Heart left ventricle (tissue), 16 donors: ENCODE measurements at regions of chr10 and their contacts with region 1.

Region 1: GRCh38 chr10:119041326-119041725 is 11.8 kb downstream of the NANOS1 start:
- DNase-seq: no peak
- ATAC-seq: no peak
- H3K4me3 ChIP-seq: no peak overlapping the region
- H3K27ac ChIP-seq: no peak overlapping the region
- H3K4me1 ChIP-seq: no peaks in the 10 kb centered on the region
- H3K27me3 ChIP-seq: no peaks in the 10 kb centered on the region
- CTCF ChIP-seq: no peak
- POLR2A ChIP-seq: no peak

Region 2: GRCh38 chr10:119070395-119071165 is 29.3 kb after region 1 on chr10:
- intact Hi-C with region 1: loop called in 2 of 10 experiments (anchors 5 kb)
- DNase-seq: no peak
- ATAC-seq: no peak
- H3K4me3 ChIP-seq: no peak overlapping the region
- H3K27ac ChIP-seq: no peak overlapping the region
- H3K4me1 ChIP-seq: peaks cover 0 to 19% (median 4%) of the 10 kb centered on the region in 12 donors
- H3K27me3 ChIP-seq: no peaks in the 10 kb centered on the region
- CTCF ChIP-seq: no peak
- POLR2A ChIP-seq: no peak

Region 3: DNA sequence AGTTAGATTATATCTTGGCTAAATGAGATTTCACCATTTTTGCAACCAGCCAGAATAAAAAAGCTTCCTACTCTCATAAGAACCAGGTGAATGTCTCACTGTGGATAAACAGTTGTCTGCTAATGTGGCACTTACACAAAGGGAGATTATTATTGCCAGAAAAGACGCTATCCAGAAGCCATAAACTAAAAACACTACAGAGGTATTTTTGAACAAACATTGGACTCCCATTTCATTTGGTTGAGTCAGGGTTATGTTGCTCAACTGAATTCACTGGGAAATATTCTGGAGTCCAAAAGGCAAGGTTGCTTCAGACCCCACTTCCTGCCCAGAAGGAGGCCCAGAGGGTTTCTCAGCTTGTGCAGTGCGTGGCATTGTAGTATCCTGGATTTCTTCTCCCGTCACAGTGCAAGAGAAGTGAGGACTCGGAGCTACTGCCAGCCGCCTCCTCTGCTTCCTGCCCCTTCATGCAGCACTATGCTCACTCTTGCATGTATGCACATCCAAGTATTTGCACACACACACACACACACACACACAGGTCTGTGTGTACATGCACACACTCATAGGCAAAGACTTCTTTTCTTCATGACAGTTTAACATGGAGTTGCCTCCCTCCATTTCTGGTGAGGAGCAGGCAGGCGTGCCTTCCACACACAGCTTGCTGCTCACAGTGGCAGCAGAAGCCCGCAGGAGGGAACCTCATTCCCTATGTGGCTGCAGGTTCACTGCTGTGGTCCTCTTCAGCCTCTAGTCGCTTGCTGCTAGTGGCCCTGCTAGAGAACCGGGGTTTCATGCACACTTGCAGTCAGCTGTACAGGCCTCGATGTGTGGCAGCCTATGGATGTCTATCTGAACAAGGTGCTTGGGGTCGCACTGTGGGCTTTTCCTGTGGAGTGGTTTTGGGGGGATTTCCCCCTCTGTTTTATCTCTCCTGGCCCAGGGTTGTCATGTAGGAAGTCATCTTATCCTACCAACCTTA is 72.7 kb after region 1 on chr10:
- intact Hi-C with region 1: loop called in 1 of 10 experiments (anchors 10 kb)
- DNase-seq: no peak
- ATAC-seq: peak in 1 of 4 donors; percentile 46
- H3K4me3 ChIP-seq: no peak overlapping the region
- H3K27ac ChIP-seq: peak overlapping the region in 1 of 12 donors; percentile 50
- H3K4me1 ChIP-seq: peaks cover 0 to 13% (median 0%) of the 10 kb centered on the region in 12 donors
- H3K27me3 ChIP-seq: no peaks in the 10 kb centered on the region
- CTCF ChIP-seq: no peak
- POLR2A ChIP-seq: no peak

Region 4: GRCh38 chr10:119315128-119316001 is 274.0 kb after region 1 on chr10:
- intact Hi-C with region 1: no loop called
- DNase-seq: peak in 3 of 5 donors; percentile 59 to 73 (median 60)
- ATAC-seq: peak in 3 of 4 donors; percentile 39 to 66 (median 40)
- H3K4me3 ChIP-seq: no peak overlapping the region
- H3K27ac ChIP-seq: peak overlapping the region in 10 of 12 donors; percentile 27 to 77 (median 56)
- H3K4me1 ChIP-seq: peaks cover 9 to 83% (median 59%) of the 10 kb centered on the region in 12 donors
- H3K27me3 ChIP-seq: no peaks in the 10 kb centered on the region
- CTCF ChIP-seq: no peak
- POLR2A ChIP-seq: no peak